Activated CD4-positive, alpha-beta T cell treated with anti-CD3 and anti-CD28 coated beads for 36 hours (primary cell): ENCODE measurements at regions of chr10 and their contacts with region 1.

Region 1: DNA sequence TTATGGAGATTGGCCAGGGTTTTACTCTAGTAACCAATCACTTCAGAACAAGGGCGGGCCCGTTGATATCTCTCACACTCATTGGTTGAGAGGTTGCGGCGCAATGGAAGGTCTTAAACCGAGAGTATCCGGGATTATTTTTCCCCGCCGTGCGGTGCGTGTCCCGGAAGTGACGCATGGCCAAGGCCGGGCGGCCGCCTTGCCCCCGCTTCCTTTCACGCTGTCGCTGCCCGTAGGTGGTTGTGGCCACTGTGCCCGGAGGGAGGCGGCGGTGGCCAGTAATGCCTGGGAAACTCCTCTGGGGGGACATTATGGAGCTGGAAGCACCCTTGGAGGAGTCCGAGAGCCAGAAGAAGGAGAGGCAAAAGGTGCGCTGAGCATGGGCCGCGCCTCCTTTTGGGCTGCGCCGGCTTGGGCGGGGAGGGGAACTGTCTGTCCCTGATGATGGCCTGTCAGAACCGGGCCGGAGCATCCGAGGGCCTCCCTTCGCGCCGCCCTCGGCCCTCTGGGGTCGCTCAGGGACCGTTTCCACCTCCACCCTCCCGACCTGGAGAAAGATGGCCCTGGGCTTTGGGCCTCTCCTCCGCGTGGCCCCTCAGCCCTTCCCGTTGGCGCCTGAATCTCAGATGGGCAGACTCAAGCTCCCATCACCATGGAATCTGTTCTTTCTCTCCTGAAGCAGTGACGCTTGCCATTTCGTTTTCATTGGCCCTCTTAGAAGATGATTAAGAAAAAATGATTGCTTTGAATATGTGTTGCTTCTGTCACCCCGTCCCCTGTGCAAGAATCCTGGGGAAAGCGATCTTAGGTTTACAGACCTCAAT is at the start of gene DDX50:
- DNase-seq: peak; percentile 98
- ATAC-seq: peak; percentile 97
- H3K4me3 Mint-ChIP-seq: peak within 1 kb of the TSS; percentile 98
- H3K27ac Mint-ChIP-seq: peak within 1 kb of the TSS; percentile 99
- H3K4me1 Mint-ChIP-seq: peaks cover 48% of the 10 kb centered on the region
- H3K27me3 Mint-ChIP-seq: peaks cover 4% of the 10 kb centered on the region
- total RNA-seq, gene DDX50: 61.6 to 81.6 TPM

Region 2: DNA sequence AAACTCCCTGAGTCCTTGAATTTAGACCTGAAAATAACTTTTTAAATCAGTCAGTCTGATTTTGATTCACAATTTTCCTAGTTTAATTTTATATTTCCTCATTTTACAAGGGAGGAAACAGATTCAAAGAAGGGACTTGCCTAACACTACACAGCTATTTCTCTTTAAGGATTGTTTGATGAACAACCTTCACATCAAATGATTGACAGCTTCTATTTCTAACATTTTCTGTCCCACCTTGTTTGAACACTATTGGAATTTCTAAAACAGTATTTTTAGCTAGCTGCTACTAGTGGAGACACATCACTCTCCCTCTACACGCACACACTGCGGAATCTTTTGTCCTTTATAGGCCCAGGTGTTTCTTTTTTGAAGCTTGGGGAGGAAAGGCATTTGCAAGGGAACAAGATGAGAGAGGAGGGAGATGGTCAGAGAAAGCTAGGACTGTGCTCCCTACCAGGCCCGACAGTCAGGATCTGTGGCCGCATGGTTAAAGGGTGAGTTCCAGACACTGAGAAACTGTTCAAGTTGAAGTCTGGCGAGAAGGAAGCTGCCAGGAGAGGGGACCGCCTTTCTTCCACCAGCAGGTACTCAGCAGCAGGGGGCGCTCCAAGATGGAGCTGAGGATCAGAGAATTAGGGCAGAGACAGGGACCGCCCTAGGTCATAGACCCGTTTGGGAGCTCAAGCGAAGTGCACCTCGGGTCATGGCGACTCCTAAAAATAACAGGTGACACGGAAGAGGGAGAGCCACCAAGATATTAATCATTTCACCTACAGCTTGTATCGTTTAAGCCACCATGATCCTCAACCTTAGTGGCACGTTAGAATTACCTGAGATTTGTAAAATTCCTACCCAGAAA is 1113.1 kb before region 1 on chr10:
- CTCF ChIA-PET with region 1: no interaction called
- POLR2A ChIA-PET with region 1: no interaction called
- intact Hi-C with region 1: loop called in 1 of 2 experiments (anchors 5 kb)
- DNase-seq: peak; percentile 92
- ATAC-seq: peak; percentile 79
- H3K4me3 Mint-ChIP-seq: no peak overlapping the region
- H3K27ac Mint-ChIP-seq: peak overlapping the region; percentile 66
- H3K4me1 Mint-ChIP-seq: peaks cover 35% of the 10 kb centered on the region
- H3K27me3 Mint-ChIP-seq: no peaks in the 10 kb centered on the region

Region 3: GRCh38 chr10:68208424-68209042 is 692.8 kb before region 1 on chr10:
- CTCF ChIA-PET with region 1: interaction called, 3 read pairs
- POLR2A ChIA-PET with region 1: no interaction called
- intact Hi-C with region 1: loop called (anchors 2 to 5 kb)
- DNase-seq: peak; percentile 53
- ATAC-seq: peak; percentile 49
- H3K4me3 Mint-ChIP-seq: no peak overlapping the region
- H3K27ac Mint-ChIP-seq: no peak overlapping the region
- H3K4me1 Mint-ChIP-seq: no peaks in the 10 kb centered on the region
- H3K27me3 Mint-ChIP-seq: peaks cover 9% of the 10 kb centered on the region

Region 4: GRCh38 chr10:68471586-68472408 is 429.5 kb before region 1 on chr10 and contains the start of gene DNA2:
- CTCF ChIA-PET with region 1: no interaction called
- POLR2A ChIA-PET with region 1: no interaction called
- intact Hi-C with region 1: loop called in 1 of 2 experiments (anchors 2 kb)
- DNase-seq: peak; percentile 89
- ATAC-seq: peak; percentile 95
- H3K4me3 Mint-ChIP-seq: peak within 1 kb of the TSS; percentile 92
- H3K27ac Mint-ChIP-seq: peak within 1 kb of the TSS; percentile 91
- H3K4me1 Mint-ChIP-seq: peaks cover 22% of the 10 kb centered on the region
- H3K27me3 Mint-ChIP-seq: no peaks in the 10 kb centered on the region
- total RNA-seq, gene DNA2: 27.3 to 28.9 TPM

Region 5: GRCh38 chr10:68720793-68721672 is 180.3 kb before region 1 on chr10 and contains the start of gene CCAR1:
- CTCF ChIA-PET with region 1: interaction called, 4 read pairs
- POLR2A ChIA-PET with region 1: no interaction called
- intact Hi-C with region 1: loop called (anchors 1 kb)
- DNase-seq: peak; percentile 98
- ATAC-seq: peak; percentile 100
- H3K4me3 Mint-ChIP-seq: peak within 1 kb of the TSS; percentile 91
- H3K27ac Mint-ChIP-seq: peak within 1 kb of the TSS; percentile 96
- H3K4me1 Mint-ChIP-seq: peaks cover 9% of the 10 kb centered on the region
- H3K27me3 Mint-ChIP-seq: no peaks in the 10 kb centered on the region
- total RNA-seq, gene CCAR1: 89.5 to 125 TPM

Region 6: DNA sequence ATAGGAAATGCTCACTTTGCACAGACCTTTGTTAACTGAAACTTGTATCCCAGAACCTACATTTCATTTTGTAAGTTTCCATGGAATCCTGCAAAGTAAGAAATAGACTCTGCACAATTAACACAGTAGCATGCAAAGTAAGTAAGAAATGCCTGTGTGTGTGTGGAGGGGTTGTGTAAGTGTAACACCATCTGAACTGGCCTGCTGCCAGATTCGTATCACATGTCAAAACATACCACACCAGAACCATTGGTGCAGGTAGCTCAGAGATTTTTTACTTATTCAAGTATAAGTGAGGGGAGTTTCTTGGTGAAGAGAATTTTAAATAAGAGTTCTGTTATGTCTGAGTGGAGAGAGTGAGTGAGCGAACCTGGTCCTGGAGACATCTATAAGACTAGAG is 36.8 kb after region 1 on chr10:
- CTCF ChIA-PET with region 1: no interaction called
- POLR2A ChIA-PET with region 1: interaction called, 10 read pairs
- intact Hi-C with region 1: no loop called
- DNase-seq: no peak
- ATAC-seq: no peak
- H3K4me3 Mint-ChIP-seq: no peak overlapping the region
- H3K27ac Mint-ChIP-seq: peak overlapping the region; percentile 0
- H3K4me1 Mint-ChIP-seq: peaks cover 13% of the 10 kb centered on the region
- H3K27me3 Mint-ChIP-seq: no peaks in the 10 kb centered on the region

Region 7: DNA sequence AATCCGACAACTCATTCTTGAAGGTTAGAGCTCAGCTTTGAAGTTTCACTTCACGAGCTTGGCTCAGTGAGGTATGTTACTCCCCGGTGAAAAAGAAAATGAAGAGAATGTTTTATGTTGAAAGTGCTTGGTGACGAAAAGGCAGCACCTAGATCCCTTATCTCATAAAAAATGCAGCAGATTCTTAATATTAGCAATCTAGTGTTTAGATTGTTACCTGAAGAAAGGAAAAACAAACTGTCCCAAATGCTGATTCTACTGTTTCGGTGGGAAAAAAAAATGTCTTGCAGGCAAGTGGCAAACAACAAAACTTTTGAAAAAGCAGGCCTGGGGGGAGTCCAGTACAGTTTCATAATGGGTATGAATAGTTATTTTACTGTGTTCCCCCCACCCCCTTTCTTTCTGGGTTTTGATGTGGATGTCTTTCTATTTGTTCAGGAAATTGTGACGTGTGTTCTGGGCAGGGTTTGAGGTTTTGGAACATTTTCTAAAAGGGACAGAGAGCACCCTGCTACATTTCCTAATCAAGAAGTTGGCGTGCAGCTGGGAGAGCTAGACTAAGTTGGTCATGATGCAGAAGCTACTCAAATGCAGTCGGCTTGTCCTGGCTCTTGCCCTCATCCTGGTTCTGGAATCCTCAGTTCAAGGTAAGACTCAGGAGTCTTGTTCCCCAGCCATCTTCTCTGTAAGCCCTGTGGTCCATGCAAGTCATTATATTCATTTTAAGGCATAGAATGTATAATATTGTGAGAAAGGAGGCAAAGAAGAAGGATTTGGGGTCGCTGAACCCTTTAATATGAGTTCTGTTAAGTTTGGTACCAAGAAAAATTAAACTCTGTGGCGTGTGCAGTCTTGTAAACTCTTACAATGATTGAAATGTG is 186.5 kb after region 1 on chr10 and contains the start of gene SRGN:
- CTCF ChIA-PET with region 1: no interaction called
- POLR2A ChIA-PET with region 1: interaction called, 3 read pairs
- intact Hi-C with region 1: loop called in 1 of 2 experiments (anchors 1 kb)
- DNase-seq: peak; percentile 87
- ATAC-seq: peak; percentile 57
- H3K4me3 Mint-ChIP-seq: peak within 1 kb of the TSS; percentile 86
- H3K27ac Mint-ChIP-seq: peak within 1 kb of the TSS; percentile 99
- H3K4me1 Mint-ChIP-seq: peaks cover 55% of the 10 kb centered on the region
- H3K27me3 Mint-ChIP-seq: no peaks in the 10 kb centered on the region
- total RNA-seq, gene SRGN: 375 to 400 TPM